CD4-positive, alpha-beta memory T cell (primary cell): ENCODE measurements at regions of chr9 and their contacts with region 1.

Region 1: GRCh38 chr9:35829084-35829763 is at the start of gene TMEM8B:
- DNase-seq: peak; percentile 85 to 96 (median 88)
- H3K4me3 ChIP-seq: peak within 1 kb of the TSS; percentile 61 to 70
- H3K4me3 Mint-ChIP-seq: peak within 1 kb of the TSS; percentile 92 to 100 (median 96)
- H3K27ac ChIP-seq: peak within 1 kb of the TSS; percentile 66
- H3K27ac Mint-ChIP-seq: peak within 1 kb of the TSS; percentile 74 to 99 (median 98)
- H3K4me1 ChIP-seq: peaks cover 20% of the 10 kb centered on the region
- H3K4me1 Mint-ChIP-seq: peaks cover 23 to 39% (median 35%) of the 10 kb centered on the region in 4 donors
- H3K27me3 ChIP-seq: no peaks in the 10 kb centered on the region
- H3K27me3 Mint-ChIP-seq: no peaks in the 10 kb centered on the region
- total RNA-seq, gene TMEM8B: 7.4 to 10.5 TPM

Region 2: DNA sequence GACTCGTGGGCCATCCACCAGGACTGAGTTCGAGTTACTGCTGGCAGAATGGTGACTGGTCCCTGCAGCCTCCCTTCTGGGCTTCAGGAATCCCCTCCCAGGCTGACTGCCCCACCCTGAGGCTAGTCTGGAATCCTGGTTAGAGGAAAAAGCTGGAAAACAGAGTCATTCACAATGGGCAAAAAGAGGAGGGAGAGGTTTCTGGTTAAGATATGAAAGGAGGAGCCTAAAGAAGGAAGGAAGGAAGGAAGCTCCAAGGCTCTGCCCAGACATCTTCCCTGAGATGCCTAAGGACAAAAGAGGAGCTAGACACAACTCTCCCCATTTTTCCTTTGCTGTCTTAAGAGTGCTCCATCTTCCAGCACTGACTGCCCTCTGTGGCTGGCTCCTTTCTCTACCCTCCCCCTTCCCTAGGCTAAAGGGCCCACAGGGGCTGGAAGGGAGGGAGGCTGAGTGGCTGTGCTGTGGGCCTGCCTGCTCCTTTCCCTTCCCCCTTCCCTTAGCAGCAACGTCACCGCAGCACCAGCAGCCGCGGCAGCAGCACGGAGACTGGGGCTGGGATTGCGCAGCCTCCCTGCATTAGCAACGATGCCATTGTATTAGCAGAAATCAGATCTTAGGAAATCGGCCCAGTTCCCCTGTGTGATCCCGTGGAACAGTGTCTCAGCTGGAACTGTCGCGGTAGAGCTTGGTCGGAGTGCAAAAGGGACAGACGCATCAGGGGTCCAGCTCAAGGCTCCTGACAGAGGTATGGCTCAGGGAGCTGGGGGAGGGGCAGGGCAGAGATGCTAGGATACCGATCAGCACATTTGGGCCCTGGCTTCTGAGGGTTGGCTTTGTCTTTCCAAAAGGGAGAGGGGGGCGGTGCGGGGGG is 290.6 kb before region 1 on chr9:
- CTCF ChIA-PET with region 1: no interaction called
- POLR2A ChIA-PET with region 1: no interaction called
- intact Hi-C with region 1: no loop called
- DNase-seq: no peak
- H3K4me3 ChIP-seq: no peak overlapping the region
- H3K4me3 Mint-ChIP-seq: no peak overlapping the region
- H3K27ac ChIP-seq: no peak overlapping the region
- H3K27ac Mint-ChIP-seq: no peak overlapping the region
- H3K4me1 ChIP-seq: no peaks in the 10 kb centered on the region
- H3K4me1 Mint-ChIP-seq: no peaks in the 10 kb centered on the region
- H3K27me3 ChIP-seq: no peaks in the 10 kb centered on the region
- H3K27me3 Mint-ChIP-seq: peaks cover 15 to 20% of the 10 kb centered on the region in 2 donors

Region 3: DNA sequence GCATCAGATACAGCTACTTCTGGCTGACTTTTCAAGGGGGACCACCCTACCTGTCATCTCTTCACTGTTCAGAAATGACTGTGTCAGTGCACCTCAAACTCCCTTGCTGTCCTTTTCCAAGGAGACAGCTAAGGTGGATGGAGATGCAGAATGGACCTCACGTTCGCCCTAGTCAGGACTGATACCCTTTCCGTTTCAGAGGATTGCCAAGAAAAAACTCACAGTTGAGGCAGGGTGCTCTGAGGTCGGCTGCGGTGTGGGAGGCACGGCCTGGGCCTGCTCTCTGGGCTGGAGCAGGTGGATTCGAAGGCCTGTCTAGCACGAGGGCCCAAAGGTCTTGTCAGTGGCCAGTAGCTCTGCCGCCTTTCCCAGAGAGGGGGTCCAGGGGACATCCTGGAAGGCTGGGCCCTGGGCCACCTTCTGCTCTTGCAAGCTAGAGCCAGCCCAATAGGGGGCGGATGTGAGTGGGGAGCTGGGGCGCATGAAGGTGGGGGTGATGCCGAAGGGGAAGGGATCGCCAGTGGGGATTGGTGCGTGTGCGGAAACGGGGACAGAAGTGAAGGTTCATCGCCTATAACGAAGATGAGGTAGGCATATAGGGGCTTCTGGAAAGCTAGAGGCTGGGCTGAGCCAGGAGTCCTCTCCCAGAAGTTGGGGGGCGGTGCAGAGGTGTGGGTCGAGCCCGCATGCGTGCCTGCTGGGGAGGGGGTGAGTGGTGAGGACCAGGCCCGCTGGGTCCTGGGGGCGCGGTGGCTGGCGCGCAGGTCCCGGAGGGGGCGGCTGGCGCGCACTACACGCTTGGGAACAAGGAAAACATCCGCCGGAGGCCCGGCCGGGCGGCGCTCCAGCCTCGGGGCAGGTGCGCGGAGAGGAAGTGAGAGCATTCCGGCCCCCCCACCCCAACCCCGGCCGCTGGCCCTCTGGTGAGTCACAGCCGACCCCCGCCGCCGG is 72.7 kb before region 1 on chr9:
- CTCF ChIA-PET with region 1: no interaction called
- POLR2A ChIA-PET with region 1: interaction called, 4 read pairs
- intact Hi-C with region 1: loop called (anchors 1 kb)
- DNase-seq: peak; percentile 68 to 80 (median 71)
- H3K4me3 ChIP-seq: peak overlapping the region; percentile 62 to 90
- H3K4me3 Mint-ChIP-seq: peak overlapping the region; percentile 97 to 100 (median 98)
- H3K27ac ChIP-seq: peak overlapping the region; percentile 70
- H3K27ac Mint-ChIP-seq: peak overlapping the region; percentile 81 to 99 (median 98)
- H3K4me1 ChIP-seq: peaks cover 22% of the 10 kb centered on the region
- H3K4me1 Mint-ChIP-seq: peaks cover 24 to 67% (median 49%) of the 10 kb centered on the region in 4 donors
- H3K27me3 ChIP-seq: no peaks in the 10 kb centered on the region
- H3K27me3 Mint-ChIP-seq: no peaks in the 10 kb centered on the region

Region 4: DNA sequence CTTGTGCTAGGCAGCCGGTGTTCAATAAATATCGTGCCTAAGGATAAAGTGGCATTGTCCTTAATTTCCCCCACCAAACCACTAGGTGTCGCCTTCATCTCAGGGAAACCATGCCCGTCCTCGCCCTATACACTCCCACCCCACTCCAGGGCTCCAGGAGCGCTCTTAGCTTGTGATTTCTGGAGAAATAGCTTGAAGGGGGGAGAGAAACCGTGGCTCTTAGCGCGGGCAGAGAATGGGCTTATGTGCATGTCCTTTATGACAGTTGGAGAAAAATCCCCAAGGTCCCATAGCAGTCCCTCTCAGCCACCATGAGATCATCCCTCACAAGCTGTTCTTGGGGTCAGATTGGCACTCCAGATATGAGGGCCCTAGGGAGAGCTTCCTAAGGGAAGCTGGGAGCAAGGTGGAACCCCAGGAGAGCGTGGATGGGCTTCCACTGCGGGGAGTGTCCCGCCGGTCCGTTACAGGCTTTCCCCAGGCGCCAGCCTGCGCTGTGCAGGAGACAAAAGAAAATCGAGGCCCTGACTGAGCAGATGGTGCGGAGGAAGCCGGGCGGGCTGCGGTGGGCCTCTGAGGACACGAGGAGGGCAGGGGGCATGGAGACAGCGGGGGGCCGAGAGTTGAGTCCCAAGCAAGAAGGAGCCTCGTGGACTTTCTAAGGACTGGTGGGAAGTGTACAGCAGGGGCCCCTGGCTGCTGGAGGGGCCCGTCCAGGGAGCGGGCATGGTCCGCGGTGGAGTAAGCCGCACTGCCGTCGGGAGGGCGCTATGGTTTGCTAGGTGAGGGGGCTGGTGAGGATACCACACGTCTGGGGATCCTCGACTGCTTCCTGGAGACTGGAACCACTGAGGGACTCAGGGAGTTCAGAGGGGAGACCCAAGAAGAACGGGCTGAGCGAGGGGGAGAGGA is 38.6 kb before region 1 on chr9:
- CTCF ChIA-PET with region 1: interaction called, 71 read pairs
- POLR2A ChIA-PET with region 1: interaction called, 6 read pairs
- intact Hi-C with region 1: loop called (anchors 1 kb)
- DNase-seq: peak; percentile 58 to 69 (median 64)
- H3K4me3 ChIP-seq: no peak overlapping the region
- H3K4me3 Mint-ChIP-seq: no peak overlapping the region
- H3K27ac ChIP-seq: no peak overlapping the region
- H3K27ac Mint-ChIP-seq: peak overlapping the region in 2 of 7 donors; percentile 27 to 47
- H3K4me1 ChIP-seq: no peaks in the 10 kb centered on the region
- H3K4me1 Mint-ChIP-seq: peaks cover 7 to 12% (median 9%) of the 10 kb centered on the region in 4 donors
- H3K27me3 ChIP-seq: no peaks in the 10 kb centered on the region
- H3K27me3 Mint-ChIP-seq: no peaks in the 10 kb centered on the region

Region 5: DNA sequence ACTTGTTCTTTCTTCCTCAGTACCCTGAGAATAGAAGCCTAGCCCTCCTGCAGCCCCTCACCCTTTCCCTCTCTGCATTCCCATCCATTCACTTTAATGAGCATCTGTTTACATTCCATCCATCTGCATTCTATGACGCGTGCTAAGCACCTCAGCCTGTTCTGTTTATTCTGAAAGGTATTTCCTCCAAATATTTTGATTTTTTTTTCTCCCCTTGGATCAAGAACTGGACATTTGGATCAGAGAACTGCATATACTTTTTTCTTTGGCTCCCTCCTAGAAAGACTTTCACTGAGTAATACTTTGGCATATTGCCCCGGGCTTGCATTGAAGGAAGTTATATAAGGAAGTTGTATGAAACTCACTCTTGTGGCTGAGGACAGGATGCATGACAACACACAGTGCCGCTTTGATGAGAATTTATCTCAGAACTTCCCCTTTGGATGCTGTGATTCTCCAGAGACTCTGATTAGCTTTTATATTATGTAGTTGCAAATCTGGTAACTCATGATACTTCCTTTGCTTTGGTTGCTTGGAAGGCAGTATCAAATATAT is 15.6 kb after region 1 on chr9:
- CTCF ChIA-PET with region 1: interaction called, 14 read pairs
- POLR2A ChIA-PET with region 1: no interaction called
- intact Hi-C with region 1: no loop called
- DNase-seq: peak; percentile 57 to 78 (median 70)
- H3K4me3 ChIP-seq: no peak overlapping the region
- H3K4me3 Mint-ChIP-seq: peak overlapping the region in 5 of 8 donors; percentile 4 to 35 (median 9)
- H3K27ac ChIP-seq: peak overlapping the region; percentile 1
- H3K27ac Mint-ChIP-seq: peak overlapping the region in 6 of 7 donors; percentile 53 to 90 (median 74)
- H3K4me1 ChIP-seq: peaks cover 21% of the 10 kb centered on the region
- H3K4me1 Mint-ChIP-seq: peaks cover 14 to 34% (median 22%) of the 10 kb centered on the region in 4 donors
- H3K27me3 ChIP-seq: no peaks in the 10 kb centered on the region
- H3K27me3 Mint-ChIP-seq: no peaks in the 10 kb centered on the region